PC-3 (cell line): ENCODE measurements at regions of chr19 and their contacts with region 1.

Region 1: DNA sequence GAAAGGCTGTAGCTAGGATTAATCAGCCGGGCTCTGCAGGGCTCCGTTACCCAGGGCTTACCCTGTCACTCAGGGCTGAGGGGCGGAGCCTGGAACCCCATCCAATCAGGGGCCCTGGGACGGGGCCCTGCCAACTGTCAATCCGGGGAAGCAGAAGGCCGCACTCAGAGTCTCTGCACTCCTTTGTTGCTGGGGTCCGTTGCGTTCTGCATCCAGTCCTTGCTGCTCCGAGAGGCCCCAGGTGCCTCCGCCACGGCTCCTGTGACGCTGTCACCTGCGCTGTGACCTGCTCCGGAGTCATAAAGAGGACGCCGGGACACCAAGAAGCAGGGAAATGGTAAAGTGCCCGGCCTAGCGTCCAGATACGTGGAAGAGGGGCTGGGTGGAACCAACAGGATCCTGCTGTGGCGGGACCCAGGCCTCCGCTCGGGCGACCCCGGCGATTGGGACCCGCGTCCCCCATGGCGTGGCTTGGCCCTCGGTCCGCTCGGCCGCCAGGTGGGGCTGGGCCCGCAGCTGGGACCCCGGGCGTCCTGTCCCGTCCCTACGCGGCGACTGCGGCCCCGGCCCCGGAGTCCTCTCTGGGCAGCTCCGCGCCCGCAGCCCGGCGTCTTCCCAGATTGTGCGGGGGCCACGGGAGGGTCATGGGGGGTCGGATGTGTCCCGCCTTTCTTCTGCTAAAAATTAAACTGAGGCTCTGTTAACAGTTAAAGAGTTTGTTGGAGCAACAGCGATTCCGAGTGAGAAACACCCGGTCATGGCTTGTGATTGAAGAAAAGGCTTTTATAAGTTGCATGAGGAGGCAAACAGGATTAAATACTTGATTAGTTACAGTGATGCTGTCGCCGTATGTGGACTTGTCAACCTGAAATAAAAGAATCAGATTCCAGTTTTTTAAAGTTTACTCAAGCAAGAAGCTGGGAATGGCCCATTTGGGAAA is at the start of gene ZNF491:
- DNase-seq: peak; percentile 90
- ATAC-seq: peak; percentile 97
- H3K4me3 ChIP-seq: peak within 1 kb of the TSS; percentile 84
- H3K27ac ChIP-seq: no peak within 1 kb of the TSS
- H3K4me1 ChIP-seq: peaks cover 11% of the 10 kb centered on the region
- H3K27me3 ChIP-seq: no peaks in the 10 kb centered on the region
- CTCF ChIP-seq: peak; percentile 57
- total RNA-seq, gene ZNF491: 0.17 and 0.47 TPM in 2 replicates

Region 2: GRCh38 chr19:11814029-11814699 is 15.5 kb after region 1 on chr19 and contains the start of gene ZNF440:
- CTCF ChIA-PET with region 1: interaction called, 17 read pairs
- POLR2A ChIA-PET with region 1: interaction called, 5 read pairs
- intact Hi-C with region 1: no loop called
- DNase-seq: peak; percentile 98
- ATAC-seq: peak; percentile 99
- H3K4me3 ChIP-seq: peak within 1 kb of the TSS; percentile 78
- H3K27ac ChIP-seq: no peak within 1 kb of the TSS
- H3K4me1 ChIP-seq: no peaks in the 10 kb centered on the region; the same call in 1 of the 2 replicates
- H3K27me3 ChIP-seq: no peaks in the 10 kb centered on the region
- CTCF ChIP-seq: no peak
- total RNA-seq, gene ZNF440: 11.6 and 11.9 TPM in 2 replicates

Region 3: DNA sequence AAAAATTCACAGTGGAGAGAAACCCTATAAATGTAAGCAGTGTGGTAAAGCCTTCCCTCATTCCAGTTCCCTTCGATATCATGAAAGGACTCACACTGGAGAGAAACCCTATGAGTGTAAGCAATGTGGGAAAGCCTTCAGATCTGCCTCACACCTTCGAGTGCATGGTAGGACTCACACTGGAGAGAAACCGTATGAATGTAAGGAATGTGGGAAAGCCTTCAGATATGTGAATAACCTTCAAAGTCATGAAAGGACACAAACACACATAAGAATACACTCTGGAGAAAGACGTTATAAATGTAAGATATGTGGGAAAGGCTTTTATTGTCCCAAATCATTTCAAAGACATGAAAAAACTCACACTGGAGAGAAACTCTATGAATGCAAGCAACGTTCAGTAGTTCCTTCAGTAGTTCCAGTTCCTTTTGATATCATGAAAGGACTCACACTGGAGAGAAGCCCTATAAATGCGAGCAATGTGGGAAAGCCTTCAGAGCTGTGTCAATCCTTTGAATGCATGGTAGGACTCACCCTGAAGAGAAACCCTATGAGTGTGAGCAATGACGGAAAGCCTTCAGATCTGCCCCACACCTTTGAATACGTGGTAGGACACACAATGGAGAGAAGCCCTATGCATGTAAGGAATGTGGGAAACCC is 33.7 kb after region 1 on chr19:
- CTCF ChIA-PET with region 1: no interaction called
- POLR2A ChIA-PET with region 1: no interaction called
- intact Hi-C with region 1: no loop called
- DNase-seq: no peak
- ATAC-seq: no peak
- H3K4me3 ChIP-seq: peak overlapping the region; percentile 12; the same call in 1 of the 2 replicates
- H3K27ac ChIP-seq: no peak overlapping the region
- H3K4me1 ChIP-seq: no peaks in the 10 kb centered on the region
- H3K27me3 ChIP-seq: no peaks in the 10 kb centered on the region
- CTCF ChIP-seq: no peak

Region 4: DNA sequence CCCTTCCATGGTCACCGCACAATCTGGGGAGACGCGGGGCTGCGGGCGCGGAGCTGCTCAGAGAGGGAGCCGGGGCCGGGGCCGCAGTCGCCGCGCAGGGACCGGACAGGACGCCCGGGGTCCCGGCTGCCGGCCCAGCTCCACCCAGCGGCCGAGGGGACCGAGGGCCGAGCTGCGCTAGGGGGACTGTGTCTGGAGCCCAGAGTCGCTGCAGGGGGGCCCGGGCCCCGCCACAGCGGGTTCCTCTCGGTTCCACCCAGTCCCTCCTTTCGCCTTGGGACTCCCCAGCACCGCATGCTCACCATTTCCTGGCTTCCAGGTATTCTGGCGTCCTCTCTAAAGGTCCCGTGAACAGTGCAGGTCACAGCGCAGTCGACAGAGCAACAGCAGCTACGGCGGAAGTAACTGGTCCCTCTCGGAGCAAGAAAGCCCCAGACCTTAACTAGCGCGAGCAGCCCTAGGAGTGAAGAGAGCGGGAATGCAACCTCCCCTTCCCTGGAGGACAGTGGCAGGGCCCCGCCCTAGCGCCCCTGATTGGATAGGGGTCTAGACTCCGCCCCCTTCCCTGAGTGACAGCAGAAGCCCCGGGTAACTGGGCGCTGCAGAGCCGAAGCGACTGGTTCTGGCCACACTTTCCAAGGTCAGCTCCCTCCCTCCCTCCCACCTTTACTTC is 254.0 kb after region 1 on chr19 and contains the start of gene ZNF878:
- CTCF ChIA-PET with region 1: interaction called, 12 read pairs
- POLR2A ChIA-PET with region 1: no interaction called
- intact Hi-C with region 1: no loop called
- DNase-seq: peak; percentile 95
- ATAC-seq: peak; percentile 98
- H3K4me3 ChIP-seq: peak within 1 kb of the TSS; percentile 81
- H3K27ac ChIP-seq: no peak within 1 kb of the TSS
- H3K4me1 ChIP-seq: peaks cover 7% of the 10 kb centered on the region; the same call in 1 of the 2 replicates
- H3K27me3 ChIP-seq: no peaks in the 10 kb centered on the region
- CTCF ChIP-seq: peak; percentile 31; the same call in 1 of the 2 replicates
- total RNA-seq, gene ZNF878: 0.23 and 1.9 TPM in 2 replicates

Region 5: GRCh38 chr19:12075538-12076139 is 277.0 kb after region 1 on chr19:
- CTCF ChIA-PET with region 1: no interaction called
- POLR2A ChIA-PET with region 1: no interaction called
- intact Hi-C with region 1: no loop called
- DNase-seq: no peak
- ATAC-seq: no peak
- H3K4me3 ChIP-seq: peak overlapping the region; percentile 18; the same call in 1 of the 2 replicates
- H3K27ac ChIP-seq: no peak overlapping the region
- H3K4me1 ChIP-seq: no peaks in the 10 kb centered on the region
- H3K27me3 ChIP-seq: no peaks in the 10 kb centered on the region
- CTCF ChIP-seq: no peak